ENCODE measurements at regions of chr4 and their contacts with region 1.

Region 1: GRCh38 chr4:25234390-25235370 is 847 bp downstream of the PI4K2B start:
- DNase-seq: peak; percentile 40
- H3K4me3 Mint-ChIP-seq: peak overlapping the region; percentile 95
- H3K27ac Mint-ChIP-seq: peak overlapping the region; percentile 98
- H3K4me1 Mint-ChIP-seq: peaks cover 35% of the 10 kb centered on the region
- H3K27me3 Mint-ChIP-seq: no peaks in the 10 kb centered on the region

Region 2: GRCh38 chr4:25253071-25253445 is 18.4 kb after region 1 on chr4:
- intact Hi-C with region 1: loop called (anchors 2 kb)
- DNase-seq: no peak
- H3K4me3 Mint-ChIP-seq: no peak overlapping the region
- H3K27ac Mint-ChIP-seq: no peak overlapping the region
- H3K4me1 Mint-ChIP-seq: peaks cover 20% of the 10 kb centered on the region
- H3K27me3 Mint-ChIP-seq: no peaks in the 10 kb centered on the region

Region 3: GRCh38 chr4:25376754-25377571 is 142.3 kb after region 1 on chr4 and contains the start of gene ANAPC4:
- intact Hi-C with region 1: loop called (anchors 1 kb)
- DNase-seq: peak; percentile 93
- H3K4me3 Mint-ChIP-seq: no peak within 1 kb of the TSS
- H3K27ac Mint-ChIP-seq: peak within 1 kb of the TSS; percentile 89
- H3K4me1 Mint-ChIP-seq: peaks cover 4% of the 10 kb centered on the region
- H3K27me3 Mint-ChIP-seq: no peaks in the 10 kb centered on the region
- total RNA-seq, gene ANAPC4: 39.5 and 40.9 TPM in 2 replicates

Region 4: DNA sequence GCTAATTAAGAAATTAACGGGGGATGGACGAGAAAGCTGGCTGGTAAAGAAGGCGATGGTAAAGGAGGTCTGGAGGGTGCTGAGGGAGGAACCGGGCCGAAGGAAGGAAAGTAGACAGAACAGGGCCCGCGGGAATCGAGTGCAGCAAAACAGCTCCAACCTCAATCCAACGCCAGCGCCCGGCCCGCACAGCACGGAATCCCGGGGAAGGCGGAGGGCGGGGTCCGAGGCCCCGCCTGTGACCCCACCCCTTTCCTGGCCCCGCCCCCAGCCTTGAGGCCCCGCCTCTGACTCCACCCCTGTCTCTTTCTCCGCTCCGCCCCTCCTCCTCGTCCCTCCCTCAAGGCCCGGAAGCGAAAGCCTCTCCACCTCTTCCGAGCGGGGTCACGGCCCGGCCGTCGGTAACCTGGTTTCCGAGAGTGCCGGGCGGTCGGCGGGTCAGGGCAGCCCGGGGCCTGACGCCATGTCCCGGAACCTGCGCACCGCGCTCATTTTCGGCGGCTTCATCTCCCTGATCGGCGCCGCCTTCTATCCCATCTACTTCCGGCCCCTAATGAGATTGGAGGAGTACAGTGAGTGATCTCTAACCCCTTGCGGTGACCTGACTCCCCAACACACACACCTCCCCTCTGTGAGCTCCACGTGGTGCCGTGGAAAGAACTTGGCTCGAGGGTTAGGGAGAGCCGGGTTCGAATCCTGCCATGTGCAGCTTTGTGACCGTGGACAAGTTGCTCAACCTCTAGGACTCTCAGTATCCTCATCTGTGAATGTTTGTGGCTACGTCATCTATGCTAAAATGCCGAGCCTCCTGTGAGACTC is 679.4 kb after region 1 on chr4 and contains the start of gene SMIM20:
- intact Hi-C with region 1: loop called (anchors 5 kb)
- DNase-seq: peak; percentile 90
- H3K4me3 Mint-ChIP-seq: peak within 1 kb of the TSS; percentile 92
- H3K27ac Mint-ChIP-seq: peak within 1 kb of the TSS; percentile 98
- H3K4me1 Mint-ChIP-seq: peaks cover 21% of the 10 kb centered on the region
- H3K27me3 Mint-ChIP-seq: peaks cover 12% of the 10 kb centered on the region
- total RNA-seq, gene SMIM20: 17.0 and 18.7 TPM in 2 replicates